ENCODE measurements at regions of chr20 and their contacts with region 1.

Region 1: GRCh38 chr20:16761305-16761829 is 13.2 kb downstream of the OTOR start:
- DNase-seq: peak in 5 of 10 donors; percentile 16 to 68 (median 55)

Region 2: DNA sequence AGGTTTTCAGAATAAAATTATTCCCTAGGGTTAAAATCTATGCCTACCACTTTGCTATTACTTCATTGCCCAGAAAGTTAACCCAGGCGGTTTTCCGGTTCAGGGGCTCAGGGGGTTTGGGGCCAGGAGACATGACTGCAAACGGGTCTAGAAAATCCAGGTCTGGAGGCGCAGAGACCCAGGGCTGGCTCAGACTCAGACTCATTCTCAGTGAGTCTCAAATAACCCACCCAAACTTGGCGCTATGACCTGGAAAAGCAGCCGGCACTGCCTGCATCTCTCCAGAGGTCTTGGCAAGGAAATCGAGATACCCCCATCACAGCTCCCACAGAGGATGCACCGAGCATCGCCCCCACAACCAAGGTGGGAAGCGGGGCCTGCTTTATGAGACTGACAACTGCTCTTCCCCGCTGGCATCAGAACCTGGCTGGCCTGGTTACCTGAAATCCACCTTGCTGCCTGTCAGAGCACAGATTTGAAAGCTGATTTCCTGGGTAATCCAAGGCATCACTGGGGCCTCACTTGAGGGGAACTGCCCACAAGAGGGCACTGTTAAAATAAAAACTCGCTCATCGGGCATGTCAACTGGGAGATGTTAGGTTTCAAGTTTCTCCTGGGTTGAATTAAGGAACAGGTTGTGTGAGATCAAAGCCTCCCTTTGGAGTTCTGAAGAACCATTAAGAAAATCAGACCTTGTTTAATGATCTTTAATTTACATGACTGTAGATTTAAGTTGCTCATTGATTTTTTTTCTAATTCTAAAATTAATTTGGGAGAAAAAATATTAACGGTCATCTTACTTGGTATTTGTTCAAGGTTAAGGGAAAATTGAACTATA is 243.2 kb before region 1 on chr20:
- intact Hi-C with region 1: loop called (anchors 5 kb)
- DNase-seq: peak in 4 of 10 donors; percentile 24 to 88 (median 36)

Region 3: GRCh38 chr20:16701296-16701695 is 60.1 kb before region 1 on chr20:
- intact Hi-C with region 1: loop called (anchors 5 kb)
- DNase-seq: no peak

Region 4: DNA sequence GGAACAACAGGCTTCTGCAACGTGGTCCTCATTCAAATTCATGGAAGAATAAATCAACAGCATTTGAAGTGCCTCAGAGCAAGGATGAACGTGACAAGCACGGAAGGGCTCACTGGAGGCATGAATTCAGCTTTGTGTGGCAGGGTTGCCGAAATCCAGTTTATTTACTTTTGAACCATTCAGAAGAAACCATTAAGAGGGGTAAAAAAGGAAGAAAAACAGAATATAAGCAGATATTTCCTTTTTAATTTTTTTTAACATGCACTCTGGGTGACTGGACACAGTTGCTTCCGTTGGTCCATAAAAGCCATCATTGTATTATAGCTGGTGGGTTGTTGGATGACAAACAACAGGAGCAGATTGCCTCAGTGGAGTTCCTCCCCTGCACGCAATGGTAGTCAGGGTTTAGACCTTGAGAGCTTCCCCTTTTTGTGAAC is 48.8 kb before region 1 on chr20:
- intact Hi-C with region 1: no loop called
- DNase-seq: no peak

Region 5: DNA sequence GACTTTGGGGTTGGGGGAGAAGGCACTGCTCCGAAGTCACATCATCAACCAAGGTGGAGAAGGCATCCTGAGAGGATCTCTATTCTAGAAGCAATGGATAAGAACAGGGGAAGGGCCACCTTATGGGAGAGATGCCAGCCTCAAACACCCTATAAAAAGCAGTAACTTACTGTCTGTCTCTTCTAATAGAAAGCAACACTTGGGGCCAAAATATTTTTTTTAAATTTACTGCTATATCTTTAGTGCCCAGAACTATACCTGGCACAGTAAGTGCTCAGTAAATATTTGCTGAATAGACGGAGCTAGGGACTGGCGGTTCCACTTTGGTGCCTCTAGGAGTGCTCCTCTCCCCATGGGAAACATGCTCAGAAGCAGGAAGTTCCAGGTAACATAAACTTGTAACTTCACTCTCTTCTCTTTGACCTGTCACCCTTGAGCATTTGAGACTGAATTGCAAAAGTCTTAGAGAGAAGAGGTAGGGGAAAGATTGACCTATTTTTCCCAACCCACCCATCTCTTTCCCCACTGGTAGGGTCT is 14.0 kb before region 1 on chr20:
- intact Hi-C with region 1: no loop called
- DNase-seq: no peak

Measured in posterior cingulate gyrus (tissue), 11 donors.